Tibial artery (tissue), 4 donors: ENCODE measurements at regions of chr2 and their contacts with region 1.

Region 1: GRCh38 chr2:219433666-219434467 is 776 bp upstream of the SPEG start:
- DNase-seq: peak in 1 of 2 donors; percentile 89
- H3K4me3 ChIP-seq: peak overlapping the region; percentile 45 to 47
- H3K27ac ChIP-seq: peak overlapping the region; percentile 96 to 97
- H3K4me1 ChIP-seq: peaks cover 0 to 77% (median 32%) of the 10 kb centered on the region in 4 donors
- H3K27me3 ChIP-seq: no peaks in the 10 kb centered on the region
- CTCF ChIP-seq: peak; percentile 50 to 60

Region 2: DNA sequence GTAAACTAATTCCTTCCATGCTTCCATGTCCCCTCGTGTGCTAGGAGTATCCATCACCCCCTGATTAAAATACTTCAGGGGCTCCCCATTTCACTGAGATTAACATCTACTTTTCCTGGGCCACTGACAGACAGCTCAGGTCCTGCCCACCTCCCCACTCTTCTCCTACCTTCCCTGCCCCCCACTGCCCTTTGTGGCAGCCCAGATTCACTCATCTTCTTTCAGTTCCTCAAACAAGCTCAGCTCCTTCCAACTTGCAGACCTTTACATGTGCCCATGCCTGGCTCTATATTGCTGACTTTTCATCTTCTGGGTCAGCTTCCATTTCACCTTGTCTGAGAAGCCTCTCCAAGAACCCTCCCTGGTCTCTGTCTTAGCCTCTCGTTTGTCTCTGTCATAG is 1352.8 kb before region 1 on chr2:
- intact Hi-C with region 1: no loop called
- DNase-seq: no peak
- H3K4me3 ChIP-seq: no peak overlapping the region
- H3K27ac ChIP-seq: no peak overlapping the region
- H3K4me1 ChIP-seq: no peaks in the 10 kb centered on the region
- H3K27me3 ChIP-seq: peaks cover 0 to 6% of the 10 kb centered on the region in 2 donors
- CTCF ChIP-seq: no peak

Region 3: GRCh38 chr2:219294356-219295351 is 139.2 kb before region 1 on chr2:
- intact Hi-C with region 1: no loop called
- DNase-seq: peak; percentile 82 to 87
- H3K4me3 ChIP-seq: peak overlapping the region; percentile 55 to 61
- H3K27ac ChIP-seq: peak overlapping the region; percentile 78 to 86
- H3K4me1 ChIP-seq: peaks cover 0 to 29% (median 14%) of the 10 kb centered on the region in 4 donors
- H3K27me3 ChIP-seq: peaks cover 0 to 12% of the 10 kb centered on the region in 2 donors
- CTCF ChIP-seq: peak; percentile 99 to 100

Region 4: GRCh38 chr2:219418570-219419189 is 15.2 kb before region 1 on chr2:
- intact Hi-C with region 1: no loop called
- DNase-seq: no peak
- H3K4me3 ChIP-seq: peak overlapping the region; percentile 61
- H3K27ac ChIP-seq: peak overlapping the region; percentile 87 to 96
- H3K4me1 ChIP-seq: peaks cover 0 to 62% (median 27%) of the 10 kb centered on the region in 4 donors
- H3K27me3 ChIP-seq: no peaks in the 10 kb centered on the region
- CTCF ChIP-seq: no peak

Region 5: GRCh38 chr2:219452838-219453317 is 19.0 kb after region 1 on chr2:
- intact Hi-C with region 1: loop called (anchors 2 kb)
- DNase-seq: peak; percentile 84 to 98
- H3K4me3 ChIP-seq: peak overlapping the region; percentile 77 to 85
- H3K27ac ChIP-seq: peak overlapping the region; percentile 96 to 97
- H3K4me1 ChIP-seq: peaks cover 0 to 96% (median 83%) of the 10 kb centered on the region in 4 donors
- H3K27me3 ChIP-seq: no peaks in the 10 kb centered on the region
- CTCF ChIP-seq: no peak

Region 6: DNA sequence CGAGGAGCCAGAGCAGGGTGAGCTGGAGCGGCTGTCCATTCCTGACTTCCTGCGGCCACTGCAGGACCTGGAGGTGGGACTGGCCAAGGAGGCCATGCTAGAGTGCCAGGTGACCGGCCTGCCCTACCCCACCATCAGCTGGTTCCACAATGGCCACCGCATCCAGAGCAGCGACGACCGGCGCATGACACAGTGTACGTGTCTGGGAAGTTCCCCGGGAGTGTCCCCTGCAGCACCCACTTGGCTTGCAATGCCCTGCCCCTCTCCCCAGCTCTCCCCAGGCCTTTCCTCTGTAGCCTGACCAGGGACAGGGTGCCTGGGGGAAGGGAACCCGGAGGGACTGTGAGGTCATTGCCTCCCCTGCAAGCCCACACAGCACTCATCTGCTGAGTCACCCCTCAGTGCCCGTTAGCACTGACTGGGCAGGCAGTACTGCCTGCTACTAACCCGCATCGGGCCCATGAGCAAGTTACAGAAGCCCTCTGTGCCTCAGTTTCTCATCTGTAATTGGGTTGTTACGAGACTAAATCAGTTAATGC is 35.4 kb after region 1 on chr2:
- intact Hi-C with region 1: no loop called
- DNase-seq: peak in 1 of 2 donors; percentile 84
- H3K4me3 ChIP-seq: no peak overlapping the region
- H3K27ac ChIP-seq: peak overlapping the region; percentile 96 to 97
- H3K4me1 ChIP-seq: peaks cover 0 to 63% (median 46%) of the 10 kb centered on the region in 4 donors
- H3K27me3 ChIP-seq: no peaks in the 10 kb centered on the region
- CTCF ChIP-seq: no peak

Region 7: DNA sequence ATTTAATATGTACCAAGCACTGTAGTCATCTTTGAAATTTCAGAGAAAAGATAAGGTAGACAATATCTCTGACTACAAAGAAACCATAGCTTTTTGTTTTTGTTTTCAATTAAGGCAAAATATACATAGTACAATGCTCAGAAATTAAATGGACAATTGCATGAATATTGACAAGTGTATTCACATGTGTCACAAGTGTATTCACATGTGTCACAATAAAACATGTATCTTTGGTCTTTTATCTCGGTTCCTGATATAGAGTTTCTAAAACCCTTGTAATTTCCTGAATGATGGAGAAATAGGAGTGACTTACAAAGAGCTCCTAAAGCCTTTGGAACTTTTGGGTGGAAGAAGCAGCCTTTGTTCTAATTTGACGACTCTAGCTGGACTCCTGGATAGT is 1381.8 kb after region 1 on chr2:
- intact Hi-C with region 1: loop called (anchors 5 kb)
- DNase-seq: no peak
- H3K4me3 ChIP-seq: no peak overlapping the region
- H3K27ac ChIP-seq: no peak overlapping the region
- H3K4me1 ChIP-seq: peaks cover 0 to 8% (median 0%) of the 10 kb centered on the region in 4 donors
- H3K27me3 ChIP-seq: no peaks in the 10 kb centered on the region
- CTCF ChIP-seq: no peak